CD4-positive, alpha-beta T cell (primary cell): ENCODE measurements at regions of chr2 and their contacts with region 1.

Region 1: GRCh38 chr2:200728630-200729029 is 83.1 kb upstream of the BZW1 start:
- DNase-seq: no peak
- ATAC-seq: no peak
- H3K4me3 ChIP-seq: no peak overlapping the region
- H3K4me3 Mint-ChIP-seq: no peak overlapping the region
- H3K27ac ChIP-seq: no peak overlapping the region
- H3K27ac Mint-ChIP-seq: no peak overlapping the region
- H3K4me1 ChIP-seq: no peaks in the 10 kb centered on the region
- H3K4me1 Mint-ChIP-seq: no peaks in the 10 kb centered on the region
- H3K27me3 ChIP-seq: no peaks in the 10 kb centered on the region
- H3K27me3 Mint-ChIP-seq: peaks cover 3% of the 10 kb centered on the region
- CTCF ChIP-seq: no peak

Region 2: DNA sequence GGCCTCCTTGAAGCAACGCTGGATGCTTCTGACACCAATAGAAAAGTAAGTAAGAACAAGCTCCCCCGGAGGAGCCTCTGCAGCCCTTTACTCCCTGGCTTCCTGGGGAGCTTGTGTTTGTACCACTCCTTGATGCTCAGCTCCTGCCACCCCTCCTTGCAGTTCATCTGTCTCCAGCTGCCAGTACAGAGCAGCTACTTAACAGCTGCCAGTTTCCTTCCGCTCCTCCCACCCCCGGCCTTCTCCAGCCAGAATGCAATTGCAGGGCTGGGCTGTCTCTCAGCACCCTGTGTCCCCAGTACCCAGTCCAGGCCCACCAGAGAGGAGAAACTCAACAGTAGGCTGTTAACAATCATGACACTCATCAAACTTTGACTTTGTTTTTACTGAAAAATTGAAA is 33.4 kb before region 1 on chr2:
- CTCF ChIA-PET with region 1: no interaction called
- POLR2A ChIA-PET with region 1: no interaction called
- intact Hi-C with region 1: no loop called
- DNase-seq: peak in 2 of 14 experiments; percentile 5 to 16
- ATAC-seq: no peak
- H3K4me3 ChIP-seq: no peak overlapping the region
- H3K4me3 Mint-ChIP-seq: no peak overlapping the region
- H3K27ac ChIP-seq: no peak overlapping the region
- H3K27ac Mint-ChIP-seq: no peak overlapping the region
- H3K4me1 ChIP-seq: no peaks in the 10 kb centered on the region
- H3K4me1 Mint-ChIP-seq: no peaks in the 10 kb centered on the region
- H3K27me3 ChIP-seq: no peaks in the 10 kb centered on the region
- H3K27me3 Mint-ChIP-seq: peaks cover 5% of the 10 kb centered on the region
- CTCF ChIP-seq: no peak

Region 3: GRCh38 chr2:200795044-200795443 is 66.4 kb after region 1 on chr2:
- CTCF ChIA-PET with region 1: no interaction called
- POLR2A ChIA-PET with region 1: no interaction called
- intact Hi-C with region 1: loop called in 1 of 2 experiments (anchors 5 kb)
- DNase-seq: no peak
- ATAC-seq: no peak
- H3K4me3 ChIP-seq: no peak overlapping the region
- H3K4me3 Mint-ChIP-seq: no peak overlapping the region
- H3K27ac ChIP-seq: no peak overlapping the region
- H3K27ac Mint-ChIP-seq: no peak overlapping the region
- H3K4me1 ChIP-seq: no peaks in the 10 kb centered on the region
- H3K4me1 Mint-ChIP-seq: no peaks in the 10 kb centered on the region
- H3K27me3 ChIP-seq: no peaks in the 10 kb centered on the region
- H3K27me3 Mint-ChIP-seq: no peaks in the 10 kb centered on the region
- CTCF ChIP-seq: no peak